Mammary epithelial cell (primary cell): ENCODE measurements at regions of chr1 and their contacts with region 1.

Region 1: DNA sequence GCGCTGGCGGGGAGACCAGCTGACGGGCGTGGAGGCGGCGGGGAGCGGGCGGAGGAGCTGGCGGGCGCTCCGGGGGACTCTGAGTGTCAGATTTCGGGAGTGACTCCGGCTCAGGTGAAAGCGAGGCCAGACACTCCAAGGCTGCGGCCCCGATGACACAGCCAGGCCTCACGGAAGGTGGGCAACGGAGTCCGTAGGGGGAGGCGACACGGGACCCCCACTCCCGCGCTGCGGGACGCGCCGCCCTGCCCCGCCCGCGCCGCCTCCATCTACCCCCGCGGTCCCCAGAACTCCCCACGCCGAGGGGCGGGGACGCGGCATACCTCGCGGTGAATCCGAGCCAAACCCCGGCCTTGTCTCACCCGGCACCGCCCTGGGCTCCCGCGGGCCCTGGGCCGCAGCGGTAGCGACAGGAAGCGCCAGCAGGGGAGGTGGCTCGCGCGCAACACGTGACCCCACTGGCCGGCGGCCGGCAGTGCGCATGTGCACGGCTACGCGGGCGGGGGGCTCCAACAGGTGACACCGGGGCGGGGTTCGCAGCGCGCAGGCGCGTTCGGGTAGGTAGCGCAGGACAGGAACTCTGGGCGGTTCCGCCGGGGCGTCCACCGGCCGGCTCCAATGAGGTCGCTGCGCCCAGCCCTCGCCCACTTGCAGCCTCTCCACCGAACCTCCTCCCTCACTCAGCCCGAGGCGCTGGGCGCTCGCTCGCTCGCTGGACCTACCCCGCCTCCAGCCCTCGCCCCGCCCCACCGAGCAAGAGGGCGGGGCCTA is at the start of gene CC2D1B:
- DNase-seq: peak; percentile 98
- H3K4me3 ChIP-seq: peak within 1 kb of the TSS; percentile 46 to 89 (median 78)
- H3K27ac ChIP-seq: peak within 1 kb of the TSS; percentile 84
- H3K4me1 ChIP-seq: peaks cover 28% of the 10 kb centered on the region
- H3K27me3 ChIP-seq: no peaks in the 10 kb centered on the region
- CTCF ChIP-seq: peak in 1 of 2 donors; percentile 13
- total RNA-seq, gene CC2D1B: 28.1 to 31.0 TPM

Region 2: GRCh38 chr1:52225174-52225573 is 140.8 kb before region 1 on chr1:
- CTCF ChIA-PET with region 1: no interaction called
- dilution Hi-C with region 1: no loop called
- in situ Hi-C with region 1: no loop called
- intact Hi-C with region 1: no loop called
- DNase-seq: no peak
- H3K4me3 ChIP-seq: no peak overlapping the region
- H3K27ac ChIP-seq: no peak overlapping the region
- H3K4me1 ChIP-seq: no peaks in the 10 kb centered on the region
- H3K27me3 ChIP-seq: no peaks in the 10 kb centered on the region
- CTCF ChIP-seq: no peak

Region 3: GRCh38 chr1:52348704-52349300 is 17.1 kb before region 1 on chr1:
- CTCF ChIA-PET with region 1: interaction called, 15 read pairs
- dilution Hi-C with region 1: no loop called
- in situ Hi-C with region 1: no loop called
- intact Hi-C with region 1: no loop called
- DNase-seq: peak; percentile 28
- H3K4me3 ChIP-seq: no peak overlapping the region
- H3K27ac ChIP-seq: no peak overlapping the region
- H3K4me1 ChIP-seq: peaks cover 5% of the 10 kb centered on the region
- H3K27me3 ChIP-seq: no peaks in the 10 kb centered on the region
- CTCF ChIP-seq: peak; percentile 25 to 56